Endothelial cell of umbilical vein (primary cell): ENCODE measurements at regions of chr6 and their contacts with region 1.

Region 1: DNA sequence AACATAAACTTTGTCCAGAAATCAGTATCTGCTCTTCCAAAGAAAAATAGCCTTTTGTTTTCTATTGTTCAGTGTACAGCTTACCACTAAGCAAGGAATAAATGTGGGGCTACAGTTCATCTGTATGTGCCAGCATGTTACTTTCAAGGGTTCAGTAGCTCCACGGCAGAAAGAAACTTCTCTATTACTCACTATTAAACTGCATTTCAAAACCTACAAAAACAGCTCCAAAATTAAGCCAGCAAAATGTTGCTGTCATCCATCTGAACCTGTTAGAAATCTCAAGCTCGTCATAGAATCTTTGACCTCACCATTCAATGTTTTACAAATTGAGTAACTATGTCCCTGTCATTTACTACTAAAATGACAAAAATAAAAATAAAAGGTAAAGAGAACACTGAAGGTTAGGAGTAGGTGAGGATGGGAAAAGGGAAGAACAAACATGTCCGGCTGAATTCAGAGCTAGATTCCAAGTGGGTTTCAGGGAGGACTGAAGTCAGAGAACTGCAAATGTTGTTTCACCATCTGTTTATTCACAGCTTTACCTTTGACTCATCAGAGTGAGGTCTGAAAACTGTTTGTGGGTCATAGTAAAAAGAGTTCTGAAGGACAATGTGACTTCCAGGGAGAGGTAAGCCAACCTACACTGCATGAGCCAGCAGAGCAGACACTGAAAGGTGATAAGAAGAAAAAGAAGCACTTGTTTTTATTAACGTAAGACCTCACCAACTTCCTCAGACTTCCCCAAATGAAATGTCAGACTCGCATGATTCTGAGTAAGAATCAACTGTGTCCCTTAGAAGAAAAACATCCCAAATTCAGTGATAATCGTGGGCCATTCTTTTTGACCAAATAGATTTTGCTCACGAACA is 62.0 kb downstream of the ATXN1 start:
- DNase-seq: no peak
- H3K4me3 ChIP-seq: no peak overlapping the region
- H3K27ac ChIP-seq: no peak overlapping the region
- H3K4me1 ChIP-seq: no peaks in the 10 kb centered on the region
- H3K27me3 ChIP-seq: no peaks in the 10 kb centered on the region
- CTCF ChIP-seq: no peak
- POLR2A ChIP-seq: no peak

Region 2: GRCh38 chr6:16684896-16685554 is 14.2 kb before region 1 on chr6:
- CTCF ChIA-PET with region 1: interaction called, 6 read pairs
- POLR2A ChIA-PET with region 1: interaction called, 3 read pairs
- dilution Hi-C with region 1: no loop called
- intact Hi-C with region 1: loop called (anchors 1 kb)
- DNase-seq: no peak
- H3K4me3 ChIP-seq: no peak overlapping the region
- H3K27ac ChIP-seq: no peak overlapping the region
- H3K4me1 ChIP-seq: peaks cover 28% of the 10 kb centered on the region
- H3K27me3 ChIP-seq: no peaks in the 10 kb centered on the region
- CTCF ChIP-seq: no peak
- POLR2A ChIP-seq: no peak